Activated naive CD4-positive, alpha-beta T cell treated with anti-CD3 and anti-CD28 coated beads for 36 hours (primary cell): ENCODE measurements at regions of chr11 and their contacts with region 1.

Region 1: DNA sequence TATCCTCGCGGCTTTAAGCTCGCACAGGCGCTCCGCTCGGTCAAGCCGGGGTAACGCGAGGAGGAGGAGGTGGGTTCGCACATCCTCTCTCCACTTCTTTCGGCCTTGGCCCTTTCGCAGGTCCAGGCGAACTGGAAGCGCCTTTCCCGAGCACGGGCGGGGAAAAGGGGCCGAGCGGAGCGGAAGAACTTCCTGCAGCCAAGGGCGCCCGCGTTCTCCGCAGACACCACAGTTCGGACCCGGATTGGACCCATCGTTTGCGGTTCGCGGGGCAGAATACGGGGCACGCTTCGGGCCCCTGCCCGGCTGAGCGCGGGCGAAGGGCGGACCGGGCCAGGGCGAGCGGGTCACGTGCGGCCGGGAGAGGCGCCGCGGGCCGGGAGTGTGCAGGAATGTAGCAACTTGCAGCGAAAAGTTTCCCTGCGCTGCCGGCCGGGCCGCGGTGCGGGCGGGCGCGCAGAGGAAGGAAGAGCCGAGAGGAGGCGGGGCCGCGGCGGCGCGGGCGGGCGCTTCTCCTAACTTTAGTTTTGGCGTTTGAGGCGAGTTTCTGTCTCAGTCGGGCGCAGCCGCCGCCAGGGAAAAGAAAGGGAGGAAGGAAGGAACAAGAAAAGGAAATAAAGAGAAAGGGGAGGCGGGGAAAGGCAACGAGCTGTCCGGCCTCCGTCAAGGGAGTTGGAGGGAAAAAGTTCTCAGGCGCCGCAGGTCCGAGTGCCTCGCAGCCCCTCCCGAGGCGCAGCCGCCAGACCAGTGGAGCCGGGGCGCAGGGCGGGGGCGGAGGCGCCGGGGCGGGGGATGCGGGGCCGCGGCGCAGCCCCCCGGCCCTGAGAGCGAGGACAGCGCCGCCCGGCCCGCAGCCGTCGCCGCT is at the start of gene YAP1:
- DNase-seq: peak; percentile 70
- H3K4me3 Mint-ChIP-seq: peak within 1 kb of the TSS; percentile 94
- H3K27ac Mint-ChIP-seq: no peak within 1 kb of the TSS
- H3K4me1 Mint-ChIP-seq: peaks cover 9% of the 10 kb centered on the region
- H3K27me3 Mint-ChIP-seq: peaks cover 39% of the 10 kb centered on the region
- total RNA-seq, gene YAP1: 1.1 to 1.5 TPM

Region 2: DNA sequence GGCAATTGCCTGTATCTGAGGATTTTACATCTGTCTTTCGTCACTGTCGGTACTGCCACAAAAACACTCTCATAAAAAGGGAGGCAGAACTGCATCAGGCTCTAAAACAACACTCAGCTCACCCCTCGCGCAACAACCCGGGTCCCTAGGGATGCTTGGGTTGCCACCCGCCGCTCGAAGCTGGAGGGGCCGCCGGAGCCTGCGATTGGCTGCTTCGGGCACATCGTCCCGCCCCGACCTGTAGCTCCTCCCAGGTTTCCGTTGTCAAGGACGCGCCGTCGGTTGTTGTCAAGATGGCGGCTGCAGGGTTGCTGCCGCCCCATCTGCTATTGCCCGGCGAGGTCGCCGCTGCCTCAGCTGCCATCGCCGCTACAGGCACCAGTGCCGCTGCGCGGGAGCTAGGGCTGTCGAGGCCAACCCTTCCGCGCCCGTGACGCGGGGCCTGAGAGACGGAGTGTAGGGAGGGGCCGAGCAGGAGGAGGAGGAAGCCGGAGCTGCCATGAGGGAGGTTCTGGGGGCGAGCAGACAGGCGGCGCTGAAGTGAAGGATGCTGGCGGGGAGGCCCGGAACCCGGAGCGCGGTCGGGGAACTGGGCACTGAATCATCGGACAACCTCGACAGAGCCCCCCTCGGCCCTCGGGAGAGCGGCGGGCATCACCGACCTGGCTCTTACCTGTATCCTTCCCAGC is 195.2 kb before region 1 on chr11 and contains the start of gene CEP126:
- CTCF ChIA-PET with region 1: no interaction called
- intact Hi-C with region 1: loop called (anchors 2 kb)
- DNase-seq: peak; percentile 96
- H3K4me3 Mint-ChIP-seq: peak within 1 kb of the TSS; percentile 87
- H3K27ac Mint-ChIP-seq: peak within 1 kb of the TSS; percentile 72
- H3K4me1 Mint-ChIP-seq: peaks cover 19% of the 10 kb centered on the region
- H3K27me3 Mint-ChIP-seq: no peaks in the 10 kb centered on the region
- total RNA-seq, gene CEP126: 1.1 to 1.2 TPM

Region 3: DNA sequence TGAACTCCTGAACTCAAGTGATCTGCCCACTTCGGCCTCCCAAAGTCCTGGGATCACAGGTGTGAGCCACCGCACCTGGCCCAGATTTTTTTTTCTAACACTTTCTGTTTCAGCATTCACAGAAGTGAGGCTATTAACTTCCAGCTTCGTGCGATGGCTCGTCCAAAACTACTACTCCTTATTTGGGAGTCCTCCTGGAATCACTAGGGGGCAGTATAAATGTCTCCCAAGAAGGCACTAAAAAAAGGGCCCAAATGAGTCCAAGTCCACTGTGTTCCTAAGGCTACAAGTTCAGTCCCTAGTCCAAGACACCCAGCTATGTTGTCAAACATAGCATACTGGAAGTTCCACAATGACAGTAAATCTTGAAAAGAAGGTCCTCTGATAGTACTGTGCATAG is 143.9 kb after region 1 on chr11:
- CTCF ChIA-PET with region 1: no interaction called
- intact Hi-C with region 1: loop called (anchors 5 kb)
- DNase-seq: no peak
- H3K4me3 Mint-ChIP-seq: no peak overlapping the region
- H3K27ac Mint-ChIP-seq: no peak overlapping the region
- H3K4me1 Mint-ChIP-seq: no peaks in the 10 kb centered on the region
- H3K27me3 Mint-ChIP-seq: no peaks in the 10 kb centered on the region

Region 4: DNA sequence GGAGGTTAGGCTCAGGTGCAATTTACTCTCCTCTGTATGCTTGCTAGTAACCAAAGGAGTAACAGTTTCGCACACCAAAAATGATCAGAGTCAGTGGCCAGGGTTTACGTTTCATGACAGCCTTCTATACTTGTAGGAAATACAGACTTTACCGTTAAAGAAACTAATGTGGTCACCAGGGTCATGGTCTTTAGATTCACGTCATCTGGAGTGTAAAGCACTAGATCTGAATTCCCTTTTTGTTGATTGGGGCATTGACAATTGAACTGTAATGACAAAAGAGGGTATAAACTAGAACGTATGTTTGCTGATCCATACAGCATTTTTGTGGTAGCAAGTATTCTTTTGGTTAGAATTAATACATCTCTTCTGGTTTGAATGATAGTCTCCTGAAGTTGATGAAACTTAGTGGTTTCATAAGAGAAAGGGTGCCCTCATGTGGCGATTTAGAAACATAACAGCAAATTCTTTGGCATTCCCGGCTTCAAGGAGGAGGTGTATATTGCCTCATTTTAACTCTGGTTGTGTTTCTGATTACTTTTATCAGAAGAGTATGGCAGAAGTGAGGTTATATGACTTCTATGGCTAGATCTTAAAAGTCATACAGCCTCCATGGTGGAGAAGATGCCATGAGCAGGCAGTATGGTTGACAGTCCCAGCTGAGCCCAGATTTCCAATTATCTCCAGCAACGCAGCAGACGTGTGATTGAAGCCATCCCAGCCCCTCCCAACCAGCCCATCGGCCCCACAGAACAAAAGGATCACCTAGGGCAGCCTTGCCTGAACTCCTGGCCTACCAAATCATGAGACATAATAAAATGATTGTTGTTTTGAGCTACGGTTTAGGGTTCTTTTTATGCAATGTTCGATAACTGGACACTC is 385.3 kb after region 1 on chr11:
- CTCF ChIA-PET with region 1: no interaction called
- intact Hi-C with region 1: no loop called
- DNase-seq: peak; percentile 53
- H3K4me3 Mint-ChIP-seq: no peak overlapping the region
- H3K27ac Mint-ChIP-seq: no peak overlapping the region
- H3K4me1 Mint-ChIP-seq: peaks cover 25% of the 10 kb centered on the region
- H3K27me3 Mint-ChIP-seq: no peaks in the 10 kb centered on the region

Region 5: DNA sequence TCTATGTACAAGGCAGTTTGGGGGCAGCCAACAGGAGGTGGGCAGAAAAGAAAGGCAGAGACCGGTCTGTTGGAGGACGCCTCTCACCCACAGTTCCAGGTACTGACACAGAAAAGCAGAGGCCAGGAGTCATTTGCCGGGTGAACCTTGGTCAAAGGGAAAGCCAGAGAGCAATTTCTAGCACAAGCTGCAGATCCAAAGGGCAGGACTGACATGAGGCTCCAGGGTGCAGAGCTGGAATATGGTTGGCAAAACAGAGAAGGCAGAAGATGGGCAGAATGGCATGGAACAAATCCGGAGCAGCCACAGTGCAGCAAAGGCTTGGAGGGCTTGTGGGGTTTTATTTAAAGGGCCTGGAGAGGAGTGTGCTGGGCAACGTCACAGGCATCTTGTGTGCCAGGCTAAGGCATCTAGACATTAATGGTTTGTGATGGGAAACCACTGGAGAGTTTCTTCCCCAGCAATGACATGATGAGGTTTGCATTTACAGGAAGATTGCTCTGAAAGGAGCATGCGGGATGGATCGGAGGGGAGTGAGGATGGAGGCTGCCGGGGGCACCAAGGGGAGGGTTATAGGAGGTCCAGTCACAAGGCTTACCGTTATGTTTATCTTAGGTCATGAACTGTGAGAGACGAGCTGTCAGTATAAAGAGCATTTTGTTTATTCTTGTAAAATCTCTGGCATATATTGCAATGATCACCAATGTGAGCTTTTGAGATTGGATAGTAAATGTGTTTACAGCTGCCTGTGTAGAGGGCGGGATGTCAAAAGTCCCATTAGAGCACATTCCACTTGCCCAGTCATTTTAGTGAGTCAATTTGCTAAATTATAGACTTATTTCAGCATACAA is 520.7 kb after region 1 on chr11:
- CTCF ChIA-PET with region 1: no interaction called
- intact Hi-C with region 1: no loop called
- DNase-seq: no peak
- H3K4me3 Mint-ChIP-seq: no peak overlapping the region
- H3K27ac Mint-ChIP-seq: no peak overlapping the region
- H3K4me1 Mint-ChIP-seq: no peaks in the 10 kb centered on the region
- H3K27me3 Mint-ChIP-seq: peaks cover 3% of the 10 kb centered on the region